ENCODE measurements at regions of chr7 and their contacts with region 1.

Region 1: DNA sequence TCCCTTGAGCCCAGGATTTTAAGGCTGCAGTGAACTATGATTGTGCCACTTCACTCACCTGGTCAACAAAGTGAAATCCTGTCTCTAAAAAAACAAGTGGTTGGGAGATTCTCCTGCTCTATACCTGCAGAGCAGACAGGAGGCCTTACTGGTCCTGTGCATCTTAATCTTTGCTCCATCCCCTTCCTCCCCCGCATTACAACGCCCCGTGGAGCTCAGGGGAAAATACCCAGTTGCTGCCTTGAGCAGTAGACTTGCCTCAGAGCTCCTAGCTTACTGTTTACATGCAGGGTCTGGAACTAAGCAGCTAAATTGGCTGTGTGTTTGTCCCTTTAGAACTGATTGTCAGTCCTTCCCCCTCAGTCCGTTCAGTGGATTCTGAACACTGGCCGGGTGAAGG is 123.8 kb upstream of the KMT2E start:
- DNase-seq: no peak
- ATAC-seq: peak; percentile 5; the same call in 1 of the 3 replicates
- H3K4me3 ChIP-seq: no peak overlapping the region
- H3K27ac ChIP-seq: no peak overlapping the region
- H3K4me1 ChIP-seq: peaks cover 43% of the 10 kb centered on the region
- H3K27me3 ChIP-seq: no peaks in the 10 kb centered on the region
- CTCF ChIP-seq: no peak
- EP300 ChIP-seq: no peak
- POLR2A ChIP-seq: no peak
- RAD21 ChIP-seq: no peak

Region 2: GRCh38 chr7:103866919-103867318 is 1023.3 kb before region 1 on chr7:
- CTCF ChIA-PET with region 1: no interaction called
- POLR2A ChIA-PET with region 1: no interaction called
- RAD21 ChIA-PET with region 1: no interaction called
- SMC1A ChIA-PET with region 1: no interaction called
- in situ Hi-C with region 1: no loop called
- intact Hi-C with region 1: no loop called
- DNase-seq: no peak
- ATAC-seq: no peak
- H3K4me3 ChIP-seq: no peak overlapping the region
- H3K27ac ChIP-seq: no peak overlapping the region
- H3K4me1 ChIP-seq: no peaks in the 10 kb centered on the region
- H3K27me3 ChIP-seq: no peaks in the 10 kb centered on the region
- CTCF ChIP-seq: no peak
- EP300 ChIP-seq: no peak
- POLR2A ChIP-seq: no peak
- RAD21 ChIP-seq: no peak

Region 3: GRCh38 chr7:104878577-104878976 is 11.6 kb before region 1 on chr7:
- CTCF ChIA-PET with region 1: interaction called, 298 read pairs
- POLR2A ChIA-PET with region 1: interaction called, 25 read pairs
- RAD21 ChIA-PET with region 1: interaction called, 147 read pairs
- SMC1A ChIA-PET with region 1: interaction called, 236 read pairs
- in situ Hi-C with region 1: no loop called
- intact Hi-C with region 1: no loop called
- DNase-seq: peak; percentile 65
- ATAC-seq: peak; percentile 90
- H3K4me3 ChIP-seq: peak overlapping the region; percentile 43; the same call in 1 of the 2 replicates
- H3K27ac ChIP-seq: peak overlapping the region; percentile 30; the same call in 1 of the 2 replicates
- H3K4me1 ChIP-seq: peaks cover 15% of the 10 kb centered on the region
- H3K27me3 ChIP-seq: no peaks in the 10 kb centered on the region
- CTCF ChIP-seq: no peak
- EP300 ChIP-seq: no peak
- POLR2A ChIP-seq: no peak
- RAD21 ChIP-seq: no peak

Region 4: GRCh38 chr7:104973909-104974415 is 83.7 kb after region 1 on chr7:
- CTCF ChIA-PET with region 1: no interaction called
- POLR2A ChIA-PET with region 1: no interaction called
- RAD21 ChIA-PET with region 1: no interaction called
- SMC1A ChIA-PET with region 1: no interaction called
- in situ Hi-C with region 1: no loop called
- intact Hi-C with region 1: no loop called
- DNase-seq: no peak
- ATAC-seq: peak; percentile 31; the same call in 1 of the 3 replicates
- H3K4me3 ChIP-seq: no peak overlapping the region
- H3K27ac ChIP-seq: no peak overlapping the region
- H3K4me1 ChIP-seq: no peaks in the 10 kb centered on the region
- H3K27me3 ChIP-seq: no peaks in the 10 kb centered on the region
- CTCF ChIP-seq: no peak
- EP300 ChIP-seq: no peak
- POLR2A ChIP-seq: no peak
- RAD21 ChIP-seq: no peak